ENCODE measurements at regions of chr14 and their contacts with region 1.

Region 1: DNA sequence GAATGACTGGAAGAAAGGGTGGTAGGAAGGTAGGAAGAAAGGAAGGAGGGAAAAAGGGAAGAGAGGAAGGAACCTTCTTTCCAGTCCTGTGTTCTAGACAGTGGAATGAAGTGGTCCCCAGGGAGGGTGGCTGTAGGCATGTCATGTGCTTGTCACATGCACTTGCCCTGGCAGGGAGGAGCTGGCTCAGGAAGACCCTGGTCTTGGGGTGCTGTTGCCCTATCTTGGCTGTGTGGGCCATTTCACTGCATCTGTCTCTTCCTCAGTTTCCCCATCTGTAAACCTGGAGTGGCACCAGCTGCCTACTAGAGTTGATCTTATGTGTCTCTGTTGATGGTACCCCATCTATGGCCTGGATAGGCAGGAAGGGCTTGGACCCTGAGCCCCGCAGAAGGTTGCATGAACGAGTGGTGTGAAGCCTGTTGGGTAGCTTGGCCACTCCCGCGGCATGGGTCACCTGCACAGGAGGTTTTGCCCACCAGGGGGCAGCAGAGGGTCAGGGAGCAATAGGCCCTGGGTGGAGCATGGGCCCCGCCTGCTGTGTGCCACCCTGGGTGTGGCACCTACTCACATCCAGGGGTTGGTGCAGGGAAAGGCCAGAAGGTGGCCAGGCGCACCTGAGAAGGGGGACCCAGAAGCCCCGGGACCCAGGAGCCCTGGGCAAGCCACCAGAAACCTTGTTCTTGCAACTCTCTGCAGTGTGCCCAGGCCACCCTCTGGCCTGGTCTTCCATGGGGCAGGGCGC is 25.1 kb downstream of the MEG3 start:
- DNase-seq: peak; percentile 76
- H3K4me3 Mint-ChIP-seq: no peak overlapping the region
- H3K27ac Mint-ChIP-seq: no peak overlapping the region
- H3K4me1 Mint-ChIP-seq: no peaks in the 10 kb centered on the region
- H3K27me3 Mint-ChIP-seq: no peaks in the 10 kb centered on the region
- CTCF ChIP-seq: peak; percentile 86

Region 2: GRCh38 chr14:100662879-100663760 is 187.9 kb before region 1 on chr14:
- CTCF ChIA-PET with region 1: interaction called, 4 read pairs
- POLR2A ChIA-PET with region 1: no interaction called
- intact Hi-C with region 1: loop called (anchors 10 kb)
- DNase-seq: peak; percentile 76
- H3K4me3 Mint-ChIP-seq: no peak overlapping the region
- H3K27ac Mint-ChIP-seq: no peak overlapping the region
- H3K4me1 Mint-ChIP-seq: peaks cover 9% of the 10 kb centered on the region
- H3K27me3 Mint-ChIP-seq: no peaks in the 10 kb centered on the region
- CTCF ChIP-seq: peak; percentile 92

Region 3: GRCh38 chr14:101665515-101666078 is 814.6 kb after region 1 on chr14:
- CTCF ChIA-PET with region 1: no interaction called
- POLR2A ChIA-PET with region 1: no interaction called
- intact Hi-C with region 1: loop called (anchors 5 kb)
- DNase-seq: peak; percentile 64
- H3K4me3 Mint-ChIP-seq: no peak overlapping the region
- H3K27ac Mint-ChIP-seq: no peak overlapping the region
- H3K4me1 Mint-ChIP-seq: no peaks in the 10 kb centered on the region
- H3K27me3 Mint-ChIP-seq: peaks cover 90% of the 10 kb centered on the region
- CTCF ChIP-seq: peak; percentile 58